Thyroid gland (tissue), 4 donors: ENCODE measurements at regions of chr10 and their contacts with region 1.

Region 1: DNA sequence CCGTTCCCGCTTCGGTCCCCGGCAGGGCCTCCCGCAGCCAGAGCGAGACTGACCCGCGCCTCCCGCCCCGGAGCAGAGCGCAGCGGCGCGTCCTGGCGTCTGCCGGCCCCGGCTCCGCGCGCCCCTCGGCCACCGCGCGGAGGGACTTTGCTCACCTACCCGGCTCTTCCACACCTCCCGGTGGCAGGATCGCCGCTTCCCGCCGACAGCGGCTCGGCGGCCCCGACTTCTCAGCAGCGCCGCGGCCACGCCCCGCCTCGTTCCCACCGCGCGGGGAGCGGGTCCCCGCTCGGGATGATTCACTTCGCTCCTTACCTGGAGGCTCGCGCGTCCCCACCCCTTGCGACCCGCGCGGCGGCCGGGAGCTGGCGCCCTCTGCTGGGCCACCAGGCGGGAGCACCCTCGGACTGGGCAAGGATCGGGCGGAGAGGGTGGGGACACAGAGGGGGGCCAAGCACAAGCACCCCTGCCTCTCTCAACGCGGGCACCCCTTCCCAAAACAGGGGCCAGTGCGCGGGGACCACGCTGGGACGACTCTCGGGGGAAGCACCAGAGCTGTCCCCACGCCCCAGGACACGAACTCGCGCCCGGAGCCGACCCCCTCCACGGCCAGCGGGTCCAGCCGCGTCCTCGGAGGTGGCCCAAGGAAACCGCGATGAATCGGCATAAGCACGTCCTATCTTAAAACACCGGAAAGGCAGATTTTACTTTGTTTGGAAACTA is 101.0 kb upstream of the SVIL start:
- DNase-seq: peak; percentile 92 to 93
- H3K4me3 ChIP-seq: peak overlapping the region; percentile 34 to 83 (median 80)
- H3K27ac ChIP-seq: peak overlapping the region; percentile 87 to 99 (median 97)
- H3K4me1 ChIP-seq: peaks cover 27 to 41% of the 10 kb centered on the region in 2 donors
- H3K27me3 ChIP-seq: no peaks in the 10 kb centered on the region
- CTCF ChIP-seq: peak; percentile 78 to 97 (median 94)
- POLR2A ChIP-seq: peak; percentile 3 to 91

Region 2: DNA sequence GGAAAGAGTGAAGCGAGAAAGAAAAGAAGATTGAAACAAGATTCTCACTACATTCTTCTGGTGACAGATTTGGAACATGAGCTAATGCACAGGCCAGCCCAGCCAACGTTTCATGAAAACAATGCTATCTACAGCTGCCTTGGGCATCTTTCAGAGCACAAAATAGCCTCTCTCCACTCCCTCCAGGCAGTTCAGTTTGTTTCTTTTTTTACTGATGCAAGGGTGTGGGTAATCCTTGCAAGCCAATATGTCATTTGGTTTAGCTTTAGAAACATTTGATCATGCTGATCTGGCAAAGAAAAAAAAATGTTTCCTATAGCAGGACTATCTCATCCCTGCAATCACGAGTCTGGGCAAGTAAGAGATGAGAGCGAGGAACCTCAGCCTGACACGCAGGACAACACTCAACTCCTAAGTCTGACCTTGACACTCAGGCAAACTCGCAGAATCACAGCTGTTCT is 136.9 kb before region 1 on chr10:
- intact Hi-C with region 1: loop called (anchors 10 kb)
- DNase-seq: no peak
- H3K4me3 ChIP-seq: no peak overlapping the region
- H3K27ac ChIP-seq: peak overlapping the region in 2 of 3 donors; percentile 7 to 13
- H3K4me1 ChIP-seq: peaks cover 0 to 14% of the 10 kb centered on the region in 2 donors
- H3K27me3 ChIP-seq: no peaks in the 10 kb centered on the region
- CTCF ChIP-seq: no peak
- POLR2A ChIP-seq: no peak

Region 3: GRCh38 chr10:29635711-29636144 is 100.0 kb before region 1 on chr10:
- intact Hi-C with region 1: loop called (anchors 10 kb)
- DNase-seq: no peak
- H3K4me3 ChIP-seq: no peak overlapping the region
- H3K27ac ChIP-seq: peak overlapping the region; percentile 78 to 91 (median 87)
- H3K4me1 ChIP-seq: peaks cover 23 to 28% of the 10 kb centered on the region in 2 donors
- H3K27me3 ChIP-seq: no peaks in the 10 kb centered on the region
- CTCF ChIP-seq: no peak
- POLR2A ChIP-seq: no peak